ENCODE measurements at regions of chrX and their contacts with region 1.

Region 1: DNA sequence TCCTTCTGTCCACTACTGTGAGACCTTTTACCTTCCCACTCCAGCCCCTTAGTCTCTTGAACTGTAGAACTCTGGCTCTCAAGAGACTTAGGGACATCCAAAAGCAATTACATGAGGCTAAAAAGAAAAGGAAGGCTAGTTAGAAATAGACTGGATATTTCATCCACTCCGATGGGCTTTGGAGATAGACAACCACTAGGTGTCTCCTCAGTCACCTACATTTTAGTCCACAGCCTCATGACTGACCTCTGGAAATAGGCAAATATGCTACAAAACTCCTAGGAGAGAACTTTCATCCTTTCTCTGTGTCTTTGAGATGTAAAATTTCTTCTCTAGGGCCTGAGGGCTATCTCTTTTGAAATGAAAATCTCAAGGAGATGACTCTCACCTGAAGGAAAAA is 45.1 kb upstream of the LAMP2 start:
- DNase-seq: no peak
- H3K4me3 ChIP-seq: no peak overlapping the region
- H3K27ac ChIP-seq: no peak overlapping the region
- H3K4me1 ChIP-seq: no peaks in the 10 kb centered on the region
- H3K27me3 ChIP-seq: no peaks in the 10 kb centered on the region
- CTCF ChIP-seq: no peak
- EP300 ChIP-seq: no peak
- POLR2A ChIP-seq: no peak

Region 2: DNA sequence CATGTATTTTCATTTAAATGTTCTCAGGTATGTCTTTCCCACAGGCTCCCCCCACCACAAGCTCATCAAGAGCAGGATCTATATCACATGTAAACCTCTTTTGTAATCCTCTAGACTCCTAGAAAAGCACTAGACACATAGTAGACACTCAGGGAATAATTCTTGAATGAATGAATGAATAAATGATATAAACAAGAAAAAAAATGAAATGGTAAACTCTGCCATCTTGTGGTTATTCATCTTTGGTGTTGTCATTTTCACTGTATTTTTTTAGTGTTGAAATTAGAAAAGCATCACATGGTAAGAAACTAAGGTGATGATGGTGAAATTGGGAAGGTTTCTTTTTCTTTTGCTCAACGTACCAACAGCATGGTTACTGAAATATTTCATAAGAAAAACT is 149.8 kb after region 1 on chrX:
- intact Hi-C with region 1: loop called in 1 of 4 experiments (anchors 10 kb)
- DNase-seq: no peak
- H3K4me3 ChIP-seq: no peak overlapping the region
- H3K27ac ChIP-seq: no peak overlapping the region
- H3K4me1 ChIP-seq: no peaks in the 10 kb centered on the region
- H3K27me3 ChIP-seq: no peaks in the 10 kb centered on the region
- CTCF ChIP-seq: no peak
- EP300 ChIP-seq: no peak
- POLR2A ChIP-seq: no peak

Measured in ovary (tissue), 10 donors.